A549 (cell line): ENCODE measurements at regions of chr17 and their contacts with region 1.

Region 1: DNA sequence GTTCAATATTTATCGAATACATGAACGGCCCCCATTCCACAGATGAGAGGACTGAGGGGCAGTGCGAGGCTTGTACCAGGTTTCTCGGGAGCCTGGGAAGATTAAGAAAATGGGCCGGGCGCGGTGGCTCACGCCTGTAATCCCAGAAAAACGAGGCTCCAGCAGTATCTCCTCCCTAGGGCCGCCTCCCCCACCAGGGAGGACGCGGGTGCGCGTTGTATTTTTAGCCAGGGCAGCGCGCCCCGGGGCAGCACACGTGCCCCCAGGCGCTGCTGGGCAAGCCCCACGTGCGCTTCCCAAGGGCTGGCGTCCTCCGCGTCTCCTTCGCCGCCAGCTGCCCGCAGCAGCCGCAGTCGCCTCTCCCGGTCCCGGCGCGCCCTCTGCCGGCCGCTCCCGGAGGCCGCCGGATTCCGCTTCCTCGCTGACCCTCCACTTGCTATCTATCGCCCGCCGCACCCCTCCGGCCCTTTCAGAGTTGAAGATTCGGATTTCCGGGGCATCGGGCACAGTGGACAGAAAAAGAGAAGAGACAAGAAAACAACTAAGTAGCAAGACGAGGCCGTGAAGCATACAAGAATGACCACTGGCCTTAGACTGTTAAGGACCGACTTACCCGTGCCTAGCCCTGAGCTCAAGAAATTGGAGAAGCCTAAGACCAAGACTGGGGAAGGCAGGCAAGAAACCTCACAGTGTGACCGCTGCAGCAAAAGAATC is 1.9 kb upstream of the YBX2 start:
- DNase-seq: peak; percentile 86 to 89
- ATAC-seq: peak; percentile 81 to 87
- H3K4me3 ChIP-seq: no peak overlapping the region; the same call in 2 of the 3 replicates
- H3K27ac ChIP-seq: peak overlapping the region; percentile 39 to 82; a peak in 5 of 6 replicates
- H3K4me1 ChIP-seq: peaks cover 22% of the 10 kb centered on the region; the same call in 2 of the 3 replicates
- CTCF ChIP-seq: peak; percentile 99
- EP300 ChIP-seq: no peak
- POLR2A ChIP-seq: no peak
- RAD21 ChIP-seq: peak; percentile 94 to 99

Region 2: DNA sequence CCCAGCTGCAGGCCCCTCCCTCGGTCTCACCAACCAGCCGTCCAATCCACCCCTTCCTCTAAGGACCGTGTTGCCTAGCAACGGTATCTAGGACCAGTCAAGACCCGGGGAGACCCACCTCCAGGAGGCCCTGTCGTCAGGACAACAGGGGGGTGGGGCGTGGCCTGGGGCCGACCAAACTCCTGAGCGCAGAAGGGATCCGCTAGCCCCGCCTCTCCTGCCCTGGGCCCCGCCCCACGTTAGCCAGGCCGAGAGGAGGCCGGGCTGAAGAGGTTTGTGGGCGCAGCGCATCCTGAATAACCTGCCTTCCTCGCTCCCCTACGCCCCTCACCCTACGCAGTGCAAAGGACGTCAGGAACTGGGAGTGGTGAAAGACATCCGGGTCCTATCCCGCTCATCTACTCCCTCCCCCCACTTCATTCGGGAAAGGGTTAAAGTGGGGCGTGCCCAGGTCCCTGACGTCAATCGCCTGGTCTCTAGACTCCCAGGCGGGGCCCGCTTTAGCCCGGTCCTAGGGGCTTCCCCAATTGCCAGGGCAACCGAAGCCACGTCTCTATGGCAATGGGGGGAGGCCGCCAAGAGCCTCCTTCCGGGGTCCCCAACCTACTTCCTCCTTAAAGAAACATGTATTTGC is 91.4 kb before region 1 on chr17:
- CTCF ChIA-PET with region 1: interaction called, 14 read pairs
- POLR2A ChIA-PET with region 1: no interaction called
- DNase-seq: peak; percentile 94 to 98
- ATAC-seq: peak; percentile 87 to 91
- H3K4me3 ChIP-seq: peak overlapping the region; percentile 52
- H3K27ac ChIP-seq: peak overlapping the region; percentile 82 to 85
- H3K4me1 ChIP-seq: peaks cover 12% of the 10 kb centered on the region
- CTCF ChIP-seq: no peak
- EP300 ChIP-seq: no peak
- POLR2A ChIP-seq: peak; percentile 59
- RAD21 ChIP-seq: no peak

Region 3: DNA sequence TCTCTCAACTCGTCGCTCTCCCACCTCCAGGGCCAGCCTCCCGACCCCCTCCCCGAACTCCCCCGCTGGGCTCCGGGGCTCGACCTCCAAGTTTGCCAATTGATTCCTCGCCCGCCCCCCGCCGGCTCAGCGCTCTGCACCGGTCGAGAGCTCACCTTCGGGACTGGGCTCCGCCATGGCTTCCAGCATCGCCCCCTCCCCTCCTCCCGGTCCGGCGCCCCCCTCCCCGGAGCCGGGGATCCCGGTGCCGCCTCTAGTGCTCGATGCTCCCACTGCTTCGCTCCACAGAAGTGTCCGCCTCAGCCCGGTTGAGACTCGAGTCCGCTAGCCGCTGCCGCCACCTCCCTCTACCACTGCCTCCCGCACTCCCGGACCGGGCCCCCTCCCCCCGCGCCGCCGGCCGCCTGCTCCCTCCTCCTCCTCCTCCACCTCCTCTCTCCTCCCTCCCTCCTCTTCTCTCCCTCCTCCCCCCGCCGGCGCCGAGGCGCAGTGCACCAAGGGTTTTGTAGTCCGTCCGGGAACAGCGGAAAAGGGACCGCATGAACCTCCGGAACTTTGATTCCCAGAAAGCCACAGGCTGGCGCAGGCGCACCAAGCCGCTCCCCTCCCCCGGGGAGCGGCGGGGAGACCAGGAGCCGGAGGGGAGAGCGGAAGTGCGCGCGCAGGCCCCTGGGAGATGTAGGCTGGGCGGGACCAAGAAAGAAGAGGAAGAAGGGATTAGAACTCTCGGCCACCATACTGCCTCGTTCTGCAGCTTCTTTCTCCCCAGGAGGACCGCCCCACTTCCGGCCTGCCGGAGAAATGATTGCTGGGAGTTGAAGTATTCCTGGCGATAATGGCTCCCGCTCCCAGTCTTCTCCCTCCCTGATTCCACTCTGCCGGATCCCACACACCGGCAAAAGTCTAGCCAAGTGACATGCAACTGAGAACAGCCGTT is 57.0 kb before region 1 on chr17 and contains the start of gene PHF23:
- CTCF ChIA-PET with region 1: interaction called, 66 read pairs
- POLR2A ChIA-PET with region 1: no interaction called
- DNase-seq: peak; percentile 100
- ATAC-seq: peak; percentile 54 to 79
- H3K4me3 ChIP-seq: peak within 1 kb of the TSS; percentile 99
- H3K27ac ChIP-seq: peak within 1 kb of the TSS; percentile 98 to 100
- H3K4me1 ChIP-seq: peaks cover 52% of the 10 kb centered on the region
- CTCF ChIP-seq: no peak
- EP300 ChIP-seq: no peak
- POLR2A ChIP-seq: peak; percentile 70
- RAD21 ChIP-seq: no peak
- polyA plus RNA-seq, gene PHF23: 52.1 and 61.2 TPM in 2 replicates

Region 4: GRCh38 chr17:7263083-7264078 is 33.0 kb before region 1 on chr17:
- CTCF ChIA-PET with region 1: interaction called, 52 read pairs
- POLR2A ChIA-PET with region 1: no interaction called
- DNase-seq: peak in 1 of 2 experiments; percentile 46
- ATAC-seq: peak; percentile 20 to 22; a peak in 4 of 6 replicates
- H3K4me3 ChIP-seq: no peak overlapping the region
- H3K27ac ChIP-seq: peak overlapping the region; percentile 73 to 83
- H3K4me1 ChIP-seq: peaks cover 64% of the 10 kb centered on the region
- CTCF ChIP-seq: no peak
- EP300 ChIP-seq: no peak
- POLR2A ChIP-seq: no peak
- RAD21 ChIP-seq: no peak

Region 5: GRCh38 chr17:7306911-7307686 is 10.8 kb after region 1 on chr17 and contains the start of gene EIF5A:
- CTCF ChIA-PET with region 1: interaction called, 58 read pairs
- POLR2A ChIA-PET with region 1: no interaction called
- DNase-seq: peak; percentile 100
- ATAC-seq: peak; percentile 86
- H3K4me3 ChIP-seq: peak within 1 kb of the TSS; percentile 98
- H3K27ac ChIP-seq: peak within 1 kb of the TSS; percentile 98 to 100
- H3K4me1 ChIP-seq: peaks cover 29% of the 10 kb centered on the region
- CTCF ChIP-seq: no peak
- EP300 ChIP-seq: no peak
- POLR2A ChIP-seq: peak; percentile 71
- RAD21 ChIP-seq: no peak
- polyA plus RNA-seq, gene EIF5A: 945 and 969 TPM in 2 replicates

Region 6: GRCh38 chr17:7336240-7337175 is 40.2 kb after region 1 on chr17 and contains the start of gene ACAP1:
- CTCF ChIA-PET with region 1: interaction called, 88 read pairs
- POLR2A ChIA-PET with region 1: no interaction called
- DNase-seq: no peak
- ATAC-seq: peak in 1 of 2 experiments; percentile 23; a peak in 1 of 6 replicates
- H3K4me3 ChIP-seq: no peak within 1 kb of the TSS
- H3K27ac ChIP-seq: no peak within 1 kb of the TSS
- H3K4me1 ChIP-seq: peaks cover 4% of the 10 kb centered on the region; the same call in 1 of the 3 replicates
- CTCF ChIP-seq: no peak
- EP300 ChIP-seq: no peak
- POLR2A ChIP-seq: no peak
- RAD21 ChIP-seq: no peak
- polyA plus RNA-seq, gene ACAP1: 0.03 and 0.41 TPM in 2 replicates